Pancreas (tissue), 10 donors: ENCODE measurements at regions of chr2 and their contacts with region 1.

Region 1: DNA sequence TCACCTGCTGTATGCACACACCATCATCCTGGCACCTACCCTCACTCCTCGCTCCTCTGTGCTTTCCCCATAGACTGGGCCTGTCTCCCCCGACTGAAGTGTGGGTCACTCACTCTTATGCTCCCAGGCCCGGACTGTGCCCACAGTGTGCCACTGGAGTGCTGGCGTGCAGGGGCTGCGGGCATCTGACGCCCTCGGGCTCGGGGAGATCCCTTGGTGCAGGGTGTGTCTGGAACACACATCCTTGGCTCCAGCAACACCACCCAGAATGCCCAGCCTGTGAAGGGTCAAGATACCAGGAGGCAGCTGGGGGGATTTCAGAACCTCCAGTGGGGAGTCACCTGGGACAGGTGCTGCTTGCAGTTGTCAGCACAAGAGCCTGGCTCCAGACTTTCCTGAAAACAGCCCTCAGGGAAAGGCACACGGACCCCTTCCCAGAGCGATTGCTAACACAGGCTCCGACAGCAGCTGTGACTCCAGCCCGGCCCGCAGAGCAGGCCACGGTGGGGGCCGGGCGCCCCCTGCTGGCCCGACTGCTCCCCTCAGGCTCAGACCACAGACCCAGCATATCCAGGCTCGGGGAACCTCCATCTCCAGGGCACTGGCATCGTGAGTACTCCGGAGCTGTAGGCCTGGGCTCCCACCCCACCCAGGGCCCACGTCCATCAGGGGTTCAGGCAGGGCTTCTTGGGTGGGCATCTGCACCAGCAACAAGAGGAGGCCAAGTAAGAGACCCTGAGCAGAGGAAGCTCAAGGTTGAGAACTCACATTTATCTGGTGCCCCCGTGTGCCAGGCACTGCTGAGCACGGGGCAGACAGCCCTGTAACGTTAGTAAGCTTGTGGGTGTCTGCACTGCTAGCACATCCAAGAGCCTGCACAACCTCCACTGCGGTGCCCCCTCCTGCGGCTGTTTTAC is 8.6 kb downstream of the HS1BP3 start:
- DNase-seq: peak in 5 of 6 donors; percentile 59 to 93 (median 86)
- ATAC-seq: peak; percentile 94 to 99 (median 96)
- H3K4me3 ChIP-seq: no peak overlapping the region
- H3K27ac ChIP-seq: no peak overlapping the region
- H3K4me1 ChIP-seq: no peaks in the 10 kb centered on the region
- H3K27me3 ChIP-seq: no peaks in the 10 kb centered on the region
- CTCF ChIP-seq: peak; percentile 82 to 98 (median 94)

Region 2: GRCh38 chr2:20135631-20136050 is 506.7 kb before region 1 on chr2:
- intact Hi-C with region 1: no loop called
- DNase-seq: peak; percentile 51 to 87 (median 73)
- ATAC-seq: peak; percentile 77 to 97 (median 89)
- H3K4me3 ChIP-seq: no peak overlapping the region
- H3K27ac ChIP-seq: no peak overlapping the region
- H3K4me1 ChIP-seq: no peaks in the 10 kb centered on the region
- H3K27me3 ChIP-seq: no peaks in the 10 kb centered on the region
- CTCF ChIP-seq: peak; percentile 47 to 60 (median 50)

Region 3: DNA sequence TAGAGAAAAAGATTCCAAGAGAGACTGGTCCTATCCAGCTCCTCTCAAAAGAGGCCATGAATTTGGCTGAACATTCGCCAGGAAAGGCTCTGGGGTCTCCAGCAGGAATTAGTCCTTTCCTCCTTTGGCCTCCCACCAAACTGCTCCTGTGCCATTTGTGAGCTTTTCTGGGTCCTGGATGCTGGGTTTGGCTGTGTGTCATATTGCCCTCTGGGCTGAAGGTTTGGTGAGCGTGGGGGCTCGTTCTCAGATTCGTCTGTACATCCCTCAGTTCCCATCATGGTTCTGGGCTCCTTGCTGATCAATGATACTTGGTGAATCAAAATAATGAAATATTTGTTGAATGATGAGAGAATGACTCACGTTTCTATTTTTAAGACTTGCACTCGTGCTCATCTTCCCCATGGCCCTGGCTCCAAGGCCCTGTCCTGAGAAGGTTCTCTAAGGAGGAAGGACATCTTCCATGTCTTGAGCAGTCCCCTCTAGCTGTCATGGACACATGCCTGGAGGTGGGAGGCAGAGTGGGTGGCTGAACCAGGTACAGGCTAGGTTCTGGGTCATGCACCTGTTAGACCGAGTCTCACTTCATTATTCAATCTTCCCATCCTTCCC is 243.3 kb before region 1 on chr2:
- intact Hi-C with region 1: loop called in 1 of 3 experiments (anchors 5 kb)
- DNase-seq: no peak
- ATAC-seq: no peak
- H3K4me3 ChIP-seq: no peak overlapping the region
- H3K27ac ChIP-seq: no peak overlapping the region
- H3K4me1 ChIP-seq: no peaks in the 10 kb centered on the region
- H3K27me3 ChIP-seq: no peaks in the 10 kb centered on the region
- CTCF ChIP-seq: no peak

Region 4: GRCh38 chr2:20443276-20443920 is 198.9 kb before region 1 on chr2:
- intact Hi-C with region 1: loop called in 2 of 3 experiments (anchors 5 kb)
- DNase-seq: peak in 4 of 6 donors; percentile 47 to 69 (median 58)
- ATAC-seq: peak; percentile 18 to 31 (median 24)
- H3K4me3 ChIP-seq: no peak overlapping the region
- H3K27ac ChIP-seq: peak overlapping the region; percentile 65 to 84 (median 77)
- H3K4me1 ChIP-seq: peaks cover 4 to 33% (median 27%) of the 10 kb centered on the region in 3 donors
- H3K27me3 ChIP-seq: no peaks in the 10 kb centered on the region
- CTCF ChIP-seq: peak; percentile 9 to 46 (median 30)